H1 (cell line): ENCODE measurements at regions of chr15 and their contacts with region 1.

Region 1: GRCh38 chr15:94400526-94401298 is 169.4 kb downstream of the MCTP2 start:
- DNase-seq: no peak
- H3K4me3 ChIP-seq: peak overlapping the region in 1 of 4 experiments; percentile 33; a peak in 1 of 8 replicates
- H3K27ac ChIP-seq: no peak overlapping the region
- H3K4me1 ChIP-seq: peaks cover 0 to 8% (median 3%) of the 10 kb centered on the region in 4 experiments; a peak in 3 of 7 replicates
- H3K27me3 ChIP-seq: no peaks in the 10 kb centered on the region
- CTCF ChIP-seq: no peak
- EP300 ChIP-seq: no peak
- POLR2A ChIP-seq: no peak
- RAD21 ChIP-seq: no peak

Region 2: GRCh38 chr15:94387849-94388441 is 12.8 kb before region 1 on chr15:
- CTCF ChIA-PET with region 1: no interaction called
- POLR2A ChIA-PET with region 1: no interaction called
- DNase-seq: no peak
- H3K4me3 ChIP-seq: no peak overlapping the region
- H3K27ac ChIP-seq: no peak overlapping the region
- H3K4me1 ChIP-seq: no peaks in the 10 kb centered on the region
- H3K27me3 ChIP-seq: no peaks in the 10 kb centered on the region
- CTCF ChIP-seq: no peak
- EP300 ChIP-seq: no peak
- POLR2A ChIP-seq: no peak
- RAD21 ChIP-seq: no peak

Region 3: GRCh38 chr15:94412979-94413746 is 12.5 kb after region 1 on chr15:
- CTCF ChIA-PET with region 1: interaction called, 12 read pairs
- POLR2A ChIA-PET with region 1: no interaction called
- DNase-seq: no peak
- H3K4me3 ChIP-seq: no peak overlapping the region
- H3K27ac ChIP-seq: no peak overlapping the region
- H3K4me1 ChIP-seq: no peaks in the 10 kb centered on the region
- H3K27me3 ChIP-seq: no peaks in the 10 kb centered on the region
- CTCF ChIP-seq: peak in 2 of 3 experiments; percentile 27 to 33; a peak in 2 of 4 replicates
- EP300 ChIP-seq: no peak
- POLR2A ChIP-seq: no peak
- RAD21 ChIP-seq: peak; percentile 61 to 64

Region 4: GRCh38 chr15:94432279-94432678 is 31.6 kb after region 1 on chr15:
- CTCF ChIA-PET with region 1: no interaction called
- POLR2A ChIA-PET with region 1: no interaction called
- DNase-seq: no peak
- H3K4me3 ChIP-seq: no peak overlapping the region
- H3K27ac ChIP-seq: no peak overlapping the region
- H3K4me1 ChIP-seq: no peaks in the 10 kb centered on the region
- H3K27me3 ChIP-seq: no peaks in the 10 kb centered on the region
- CTCF ChIP-seq: no peak
- EP300 ChIP-seq: no peak
- POLR2A ChIP-seq: no peak
- RAD21 ChIP-seq: no peak